Sciatic nerve (tissue), 2 donors: ENCODE measurements at regions of chr20 and their contacts with region 1.

Region 1: DNA sequence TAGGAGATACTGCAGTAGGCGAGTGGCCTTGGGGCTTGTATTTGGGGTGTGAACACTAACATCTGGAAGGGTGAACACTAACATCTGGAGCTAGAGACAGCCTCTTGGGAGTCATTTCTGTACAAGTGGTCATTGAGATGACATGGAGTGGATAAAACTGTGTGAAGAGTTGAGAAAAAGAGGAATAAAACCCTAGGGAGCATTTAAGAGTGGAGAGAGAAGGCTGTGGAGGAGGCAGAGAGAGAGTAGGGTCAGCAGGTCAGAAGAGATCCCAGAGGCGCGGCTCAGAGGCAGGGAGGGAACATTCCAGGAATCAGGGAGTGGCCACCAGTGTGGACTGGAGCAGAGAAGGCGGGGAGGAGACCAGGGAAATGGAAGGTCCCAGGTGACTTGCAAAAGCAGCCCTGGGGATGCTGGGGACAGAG is 202.0 kb upstream of the RNF24 start:
- DNase-seq: peak; percentile 68
- ATAC-seq: peak; percentile 91

Region 2: GRCh38 chr20:4108495-4109306 is 108.7 kb before region 1 on chr20:
- intact Hi-C with region 1: no loop called
- DNase-seq: peak; percentile 78
- ATAC-seq: peak; percentile 90

Region 3: GRCh38 chr20:5056801-5057599 is 839.6 kb after region 1 on chr20:
- intact Hi-C with region 1: loop called (anchors 10 kb)
- DNase-seq: peak; percentile 77
- ATAC-seq: peak; percentile 81